Natural killer cell (primary cell): ENCODE measurements at regions of chr1 and their contacts with region 1.

Region 1: DNA sequence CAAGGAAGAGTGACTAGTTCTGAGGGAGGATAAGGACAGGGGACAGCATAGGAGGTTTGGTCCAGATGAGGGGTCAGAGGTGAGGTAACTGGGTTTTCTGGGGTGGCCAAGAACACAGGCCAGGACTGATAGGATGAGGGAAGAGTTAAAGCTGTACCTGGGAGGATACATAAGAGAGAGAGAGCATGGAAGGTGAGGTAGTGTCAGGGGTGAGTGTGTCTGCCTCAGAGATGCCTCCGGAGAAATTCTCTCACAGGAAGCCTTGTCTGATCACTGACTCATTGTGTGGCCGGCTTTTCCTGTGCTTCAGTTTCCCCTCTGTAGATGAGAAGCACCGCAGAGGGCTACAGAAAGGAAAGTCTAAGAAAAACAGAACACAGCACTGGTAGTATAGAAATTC is 40.2 kb downstream of the FASLG start:
- DNase-seq: peak; percentile 66 to 88
- ATAC-seq: peak; percentile 73 to 91 (median 89)
- H3K4me3 ChIP-seq: no peak overlapping the region
- H3K4me3 Mint-ChIP-seq: peak overlapping the region; percentile 79
- H3K27ac ChIP-seq: peak overlapping the region; percentile 96
- H3K27ac Mint-ChIP-seq: no peak overlapping the region
- H3K4me1 ChIP-seq: peaks cover 64% of the 10 kb centered on the region
- H3K4me1 Mint-ChIP-seq: peaks cover 54 to 57% of the 10 kb centered on the region in 2 donors
- H3K27me3 ChIP-seq: no peaks in the 10 kb centered on the region
- H3K27me3 Mint-ChIP-seq: no peaks in the 10 kb centered on the region
- CTCF ChIP-seq: no peak

Region 2: GRCh38 chr1:172357753-172358385 is 341.2 kb before region 1 on chr1:
- intact Hi-C with region 1: loop called (anchors 10 kb)
- DNase-seq: peak in 1 of 2 donors; percentile 40
- ATAC-seq: peak; percentile 16 to 41 (median 27)
- H3K4me3 ChIP-seq: no peak overlapping the region
- H3K4me3 Mint-ChIP-seq: peak overlapping the region; percentile 81
- H3K27ac ChIP-seq: peak overlapping the region; percentile 82
- H3K27ac Mint-ChIP-seq: peak overlapping the region; percentile 89 to 90
- H3K4me1 ChIP-seq: peaks cover 20% of the 10 kb centered on the region
- H3K4me1 Mint-ChIP-seq: peaks cover 41 to 50% of the 10 kb centered on the region in 2 donors
- H3K27me3 ChIP-seq: no peaks in the 10 kb centered on the region
- H3K27me3 Mint-ChIP-seq: no peaks in the 10 kb centered on the region
- CTCF ChIP-seq: no peak

Region 3: GRCh38 chr1:172638885-172639831 is 60.0 kb before region 1 on chr1:
- intact Hi-C with region 1: loop called (anchors 1 kb)
- DNase-seq: peak; percentile 47 to 79
- ATAC-seq: peak; percentile 70 to 84 (median 84)
- H3K4me3 ChIP-seq: peak overlapping the region; percentile 8
- H3K4me3 Mint-ChIP-seq: peak overlapping the region; percentile 87
- H3K27ac ChIP-seq: peak overlapping the region; percentile 57
- H3K27ac Mint-ChIP-seq: peak overlapping the region; percentile 90 to 93
- H3K4me1 ChIP-seq: peaks cover 56% of the 10 kb centered on the region
- H3K4me1 Mint-ChIP-seq: peaks cover 57 to 71% of the 10 kb centered on the region in 2 donors
- H3K27me3 ChIP-seq: no peaks in the 10 kb centered on the region
- H3K27me3 Mint-ChIP-seq: no peaks in the 10 kb centered on the region
- CTCF ChIP-seq: no peak

Region 4: DNA sequence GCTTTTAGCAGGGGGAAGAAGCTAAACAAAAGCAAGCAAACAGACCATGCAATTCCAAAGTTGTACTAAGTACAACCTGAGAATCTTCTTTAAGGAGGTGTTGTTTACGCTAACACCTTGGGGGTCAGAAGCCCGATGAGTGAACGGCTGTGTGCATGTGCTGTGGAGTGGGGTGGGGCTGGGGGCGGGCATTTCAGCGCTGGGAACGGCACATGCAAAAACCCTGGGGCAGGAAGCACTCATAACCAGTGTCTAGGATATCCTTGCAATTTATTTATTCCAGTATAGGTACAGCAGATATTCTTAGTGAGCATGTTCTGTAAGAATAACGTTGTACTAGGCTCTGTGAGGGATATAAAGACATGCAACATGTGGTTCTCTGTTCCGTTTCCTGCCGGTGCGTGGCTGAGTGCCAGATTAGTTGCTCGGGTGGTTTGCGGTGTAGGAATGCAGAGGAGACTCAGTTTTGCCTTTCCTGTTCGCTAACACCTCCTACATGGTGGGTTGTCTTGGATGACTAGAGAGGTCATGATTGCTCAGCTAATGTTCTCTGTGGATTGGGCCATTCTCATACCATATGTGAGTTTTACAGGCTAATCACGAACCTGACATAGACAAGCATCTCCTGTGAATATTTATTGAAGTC is 36.5 kb before region 1 on chr1:
- intact Hi-C with region 1: loop called (anchors 1 kb)
- DNase-seq: peak; percentile 83 to 93
- ATAC-seq: peak; percentile 71 to 86 (median 82)
- H3K4me3 ChIP-seq: peak overlapping the region; percentile 72
- H3K4me3 Mint-ChIP-seq: peak overlapping the region; percentile 92
- H3K27ac ChIP-seq: peak overlapping the region; percentile 90
- H3K27ac Mint-ChIP-seq: peak overlapping the region; percentile 98
- H3K4me1 ChIP-seq: peaks cover 30% of the 10 kb centered on the region
- H3K4me1 Mint-ChIP-seq: peaks cover 82 to 88% of the 10 kb centered on the region in 2 donors
- H3K27me3 ChIP-seq: no peaks in the 10 kb centered on the region
- H3K27me3 Mint-ChIP-seq: no peaks in the 10 kb centered on the region
- CTCF ChIP-seq: no peak

Region 5: GRCh38 chr1:172671591-172671990 is 27.5 kb before region 1 on chr1:
- intact Hi-C with region 1: loop called (anchors 1 kb)
- DNase-seq: no peak
- ATAC-seq: no peak
- H3K4me3 ChIP-seq: no peak overlapping the region
- H3K4me3 Mint-ChIP-seq: peak overlapping the region; percentile 82
- H3K27ac ChIP-seq: peak overlapping the region; percentile 83
- H3K27ac Mint-ChIP-seq: peak overlapping the region; percentile 79 to 98
- H3K4me1 ChIP-seq: peaks cover 58% of the 10 kb centered on the region
- H3K4me1 Mint-ChIP-seq: peaks cover 91 to 97% of the 10 kb centered on the region in 2 donors
- H3K27me3 ChIP-seq: no peaks in the 10 kb centered on the region
- H3K27me3 Mint-ChIP-seq: no peaks in the 10 kb centered on the region
- CTCF ChIP-seq: no peak

Region 6: DNA sequence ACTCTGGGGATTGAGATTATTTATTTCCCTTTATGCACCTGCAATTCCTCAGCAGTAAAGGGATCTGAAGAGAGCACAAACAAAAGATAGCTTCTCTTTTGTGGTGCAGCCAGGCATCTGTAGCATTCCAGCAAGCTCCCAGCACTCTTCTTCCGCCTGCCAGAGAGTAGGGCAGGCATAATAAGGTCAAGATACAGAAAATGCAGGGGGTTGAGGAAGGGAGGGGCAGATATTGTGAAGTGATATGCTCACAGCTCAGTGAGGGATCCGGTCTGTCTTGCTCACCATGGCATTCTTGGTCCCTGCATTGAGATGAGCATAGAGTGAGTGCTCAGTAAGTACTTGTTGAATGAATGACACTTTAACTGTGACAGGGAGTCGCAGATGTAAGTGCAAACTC is 16.3 kb before region 1 on chr1:
- intact Hi-C with region 1: loop called (anchors 2 kb)
- DNase-seq: peak in 1 of 2 donors; percentile 26
- ATAC-seq: peak; percentile 78 to 95 (median 93)
- H3K4me3 ChIP-seq: no peak overlapping the region
- H3K4me3 Mint-ChIP-seq: peak overlapping the region; percentile 70
- H3K27ac ChIP-seq: peak overlapping the region; percentile 32
- H3K27ac Mint-ChIP-seq: peak overlapping the region; percentile 88 to 89
- H3K4me1 ChIP-seq: peaks cover 25% of the 10 kb centered on the region
- H3K4me1 Mint-ChIP-seq: peaks cover 74 to 78% of the 10 kb centered on the region in 2 donors
- H3K27me3 ChIP-seq: no peaks in the 10 kb centered on the region
- H3K27me3 Mint-ChIP-seq: no peaks in the 10 kb centered on the region
- CTCF ChIP-seq: no peak

Region 7: DNA sequence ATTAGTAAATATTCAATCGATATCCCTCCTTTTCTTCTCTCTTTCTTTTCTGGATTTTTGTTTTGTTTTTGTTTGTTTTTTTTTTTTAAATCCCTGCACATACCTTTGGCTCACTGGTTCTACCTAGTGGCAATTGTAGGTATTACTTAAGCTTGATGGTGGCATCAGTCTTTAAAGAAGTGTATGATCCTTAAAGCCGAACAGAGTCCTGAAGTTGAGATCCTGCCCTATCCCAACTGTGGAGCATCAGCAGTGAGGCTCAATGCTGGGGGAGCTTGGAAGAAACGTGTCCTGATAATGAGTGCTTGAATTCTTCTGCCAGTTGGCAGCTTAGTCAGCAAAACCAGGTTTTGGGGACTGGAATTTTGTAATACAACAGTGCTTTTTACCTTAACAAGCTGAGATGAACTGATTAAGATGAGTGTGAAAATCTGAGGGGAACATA is 20.6 kb after region 1 on chr1:
- intact Hi-C with region 1: loop called (anchors 2 kb)
- DNase-seq: peak in 1 of 2 donors; percentile 79
- ATAC-seq: peak; percentile 78 to 94 (median 91)
- H3K4me3 ChIP-seq: no peak overlapping the region
- H3K4me3 Mint-ChIP-seq: peak overlapping the region; percentile 14
- H3K27ac ChIP-seq: no peak overlapping the region
- H3K27ac Mint-ChIP-seq: peak overlapping the region; percentile 20 to 74
- H3K4me1 ChIP-seq: peaks cover 22% of the 10 kb centered on the region
- H3K4me1 Mint-ChIP-seq: peaks cover 48 to 50% of the 10 kb centered on the region in 2 donors
- H3K27me3 ChIP-seq: no peaks in the 10 kb centered on the region
- H3K27me3 Mint-ChIP-seq: no peaks in the 10 kb centered on the region
- CTCF ChIP-seq: peak; percentile 93

Region 8: GRCh38 chr1:172778456-172779455 is 79.6 kb after region 1 on chr1:
- intact Hi-C with region 1: no loop called
- DNase-seq: peak in 1 of 2 donors; percentile 49
- ATAC-seq: peak; percentile 79 to 87 (median 81)
- H3K4me3 ChIP-seq: no peak overlapping the region
- H3K4me3 Mint-ChIP-seq: peak overlapping the region; percentile 74
- H3K27ac ChIP-seq: no peak overlapping the region
- H3K27ac Mint-ChIP-seq: peak overlapping the region; percentile 11 to 77
- H3K4me1 ChIP-seq: no peaks in the 10 kb centered on the region
- H3K4me1 Mint-ChIP-seq: peaks cover 28 to 34% of the 10 kb centered on the region in 2 donors
- H3K27me3 ChIP-seq: no peaks in the 10 kb centered on the region
- H3K27me3 Mint-ChIP-seq: no peaks in the 10 kb centered on the region
- CTCF ChIP-seq: peak; percentile 49

Region 9: DNA sequence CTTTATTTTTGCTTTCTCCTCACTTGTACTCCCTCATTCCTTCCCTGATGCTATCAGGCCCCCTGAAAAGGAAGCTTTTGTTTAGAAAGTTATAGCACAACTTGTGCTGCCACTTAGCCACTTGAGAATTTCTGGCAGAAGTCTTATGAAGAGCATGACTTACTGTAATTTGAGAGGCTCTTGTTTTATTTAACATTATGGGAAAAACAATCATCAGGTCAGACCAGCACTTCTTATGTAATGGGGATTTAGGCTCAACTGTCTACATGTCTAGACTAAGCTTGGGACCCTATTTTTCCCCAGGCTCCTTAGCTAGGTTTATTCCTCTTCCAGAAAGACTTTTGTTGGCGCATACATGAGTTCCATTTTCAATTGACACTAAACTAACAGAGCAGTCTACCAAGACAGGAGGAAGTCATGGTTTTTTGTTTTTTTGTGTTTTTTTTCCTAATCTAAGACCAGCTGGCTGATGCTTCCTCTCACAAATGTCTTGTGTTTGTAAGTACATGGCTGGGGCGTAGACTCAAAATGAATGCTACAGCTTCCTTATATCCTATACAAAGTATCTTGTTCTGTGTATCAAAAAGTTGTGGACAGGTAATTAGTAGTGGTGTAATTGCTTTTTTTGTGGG is 476.5 kb after region 1 on chr1:
- intact Hi-C with region 1: no loop called
- DNase-seq: no peak
- ATAC-seq: no peak
- H3K4me3 ChIP-seq: no peak overlapping the region
- H3K4me3 Mint-ChIP-seq: no peak overlapping the region
- H3K27ac ChIP-seq: no peak overlapping the region
- H3K27ac Mint-ChIP-seq: no peak overlapping the region
- H3K4me1 ChIP-seq: no peaks in the 10 kb centered on the region
- H3K4me1 Mint-ChIP-seq: no peaks in the 10 kb centered on the region
- H3K27me3 ChIP-seq: no peaks in the 10 kb centered on the region
- H3K27me3 Mint-ChIP-seq: no peaks in the 10 kb centered on the region
- CTCF ChIP-seq: no peak